Activated CD8-positive, alpha-beta T cell treated with anti-CD3 and anti-CD28 coated beads for 36 hours (primary cell): ENCODE measurements at regions of chr7 and their contacts with region 1.

Region 1: DNA sequence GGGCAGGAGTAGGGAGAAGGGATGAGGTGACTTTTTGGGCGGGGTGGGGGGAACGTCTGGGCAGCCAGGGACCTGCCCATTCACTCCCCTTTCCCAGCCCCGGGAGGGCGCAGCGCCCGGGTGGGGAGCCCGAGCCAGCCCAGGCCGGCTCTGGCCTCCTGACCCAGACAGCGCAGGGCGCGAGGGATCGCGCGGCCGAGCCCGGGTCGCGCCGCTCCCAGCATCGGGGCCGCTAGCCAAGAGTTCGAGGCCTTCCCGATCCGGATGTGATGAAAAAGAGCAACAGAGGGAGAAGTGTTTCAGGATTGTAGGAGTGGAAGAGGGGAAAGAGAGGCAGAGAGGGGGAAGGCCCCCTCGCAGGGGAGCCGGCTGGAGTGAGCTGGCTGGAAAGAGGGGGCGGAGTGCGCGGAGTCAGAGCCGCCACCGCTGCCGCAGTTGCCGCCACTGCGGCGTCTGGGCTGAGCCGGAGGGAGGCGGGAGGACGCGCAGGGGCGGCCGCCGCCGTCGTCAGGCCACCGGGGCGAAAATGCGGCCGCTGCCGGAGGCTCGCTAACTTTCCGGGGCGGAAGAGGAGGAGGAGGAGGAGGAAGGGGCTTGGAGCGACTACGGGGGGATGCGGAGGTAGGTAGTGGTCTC is at the start of gene MDFIC:
- DNase-seq: peak; percentile 72
- ATAC-seq: peak; percentile 64
- H3K4me3 Mint-ChIP-seq: peak within 1 kb of the TSS; percentile 81
- H3K27ac Mint-ChIP-seq: peak within 1 kb of the TSS; percentile 98
- H3K4me1 Mint-ChIP-seq: peaks cover 58% of the 10 kb centered on the region
- H3K27me3 Mint-ChIP-seq: no peaks in the 10 kb centered on the region
- CTCF ChIP-seq: no peak
- total RNA-seq, gene MDFIC: 53.5 to 55.3 TPM

Region 2: DNA sequence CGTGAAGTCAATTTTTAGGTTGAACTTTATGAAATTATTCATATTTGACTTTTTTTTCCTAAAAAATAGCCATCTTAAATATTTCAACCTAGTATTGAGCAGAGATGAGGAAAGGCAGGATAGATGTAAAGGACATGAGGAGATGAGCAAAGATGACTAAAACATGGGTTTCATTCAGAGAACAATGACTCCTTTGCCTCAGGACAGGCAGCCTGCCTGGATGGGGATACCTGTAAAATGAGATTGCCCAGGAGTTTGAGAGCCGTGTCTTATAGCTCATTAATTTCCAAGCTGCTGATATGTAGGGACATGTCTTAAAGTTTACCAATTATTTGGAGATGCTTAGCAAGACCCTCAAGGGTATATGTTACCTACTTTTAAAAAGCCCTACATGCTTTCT is 244.0 kb before region 1 on chr7:
- CTCF ChIA-PET with region 1: no interaction called
- POLR2A ChIA-PET with region 1: no interaction called
- intact Hi-C with region 1: no loop called
- DNase-seq: no peak
- ATAC-seq: no peak
- H3K4me3 Mint-ChIP-seq: no peak overlapping the region
- H3K27ac Mint-ChIP-seq: no peak overlapping the region
- H3K4me1 Mint-ChIP-seq: no peaks in the 10 kb centered on the region
- H3K27me3 Mint-ChIP-seq: peaks cover 1% of the 10 kb centered on the region
- CTCF ChIP-seq: no peak

Region 3: GRCh38 chr7:114789871-114790311 is 132.2 kb before region 1 on chr7:
- CTCF ChIA-PET with region 1: no interaction called
- POLR2A ChIA-PET with region 1: no interaction called
- intact Hi-C with region 1: loop called (anchors 10 kb)
- DNase-seq: no peak
- ATAC-seq: peak; percentile 55
- H3K4me3 Mint-ChIP-seq: no peak overlapping the region
- H3K27ac Mint-ChIP-seq: peak overlapping the region; percentile 72
- H3K4me1 Mint-ChIP-seq: peaks cover 34% of the 10 kb centered on the region
- H3K27me3 Mint-ChIP-seq: peaks cover 4% of the 10 kb centered on the region
- CTCF ChIP-seq: no peak

Region 4: DNA sequence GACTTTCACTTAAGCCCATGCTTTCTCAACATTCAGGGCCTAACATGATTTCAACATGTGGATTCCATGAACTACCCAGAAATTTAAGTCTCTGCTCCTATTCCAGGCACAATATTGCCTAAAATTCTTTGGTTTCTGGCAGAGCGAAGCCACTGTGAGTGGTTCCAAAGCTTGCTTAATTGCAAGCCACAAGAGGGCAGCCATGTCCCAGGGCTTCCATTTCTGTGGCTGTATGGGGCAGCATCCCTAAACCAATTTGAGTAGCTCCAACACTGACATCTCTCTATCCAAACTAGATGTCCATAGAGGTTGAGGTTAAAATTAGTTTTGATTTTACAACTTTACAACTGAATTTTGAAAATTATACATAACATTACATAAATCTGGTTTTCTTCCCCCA is 56.6 kb before region 1 on chr7:
- CTCF ChIA-PET with region 1: interaction called, 25 read pairs
- POLR2A ChIA-PET with region 1: interaction called, 3 read pairs
- intact Hi-C with region 1: loop called (anchors 5 kb)
- DNase-seq: peak; percentile 71
- ATAC-seq: peak; percentile 83
- H3K4me3 Mint-ChIP-seq: no peak overlapping the region
- H3K27ac Mint-ChIP-seq: no peak overlapping the region
- H3K4me1 Mint-ChIP-seq: peaks cover 4% of the 10 kb centered on the region
- H3K27me3 Mint-ChIP-seq: no peaks in the 10 kb centered on the region
- CTCF ChIP-seq: peak; percentile 72

Region 5: DNA sequence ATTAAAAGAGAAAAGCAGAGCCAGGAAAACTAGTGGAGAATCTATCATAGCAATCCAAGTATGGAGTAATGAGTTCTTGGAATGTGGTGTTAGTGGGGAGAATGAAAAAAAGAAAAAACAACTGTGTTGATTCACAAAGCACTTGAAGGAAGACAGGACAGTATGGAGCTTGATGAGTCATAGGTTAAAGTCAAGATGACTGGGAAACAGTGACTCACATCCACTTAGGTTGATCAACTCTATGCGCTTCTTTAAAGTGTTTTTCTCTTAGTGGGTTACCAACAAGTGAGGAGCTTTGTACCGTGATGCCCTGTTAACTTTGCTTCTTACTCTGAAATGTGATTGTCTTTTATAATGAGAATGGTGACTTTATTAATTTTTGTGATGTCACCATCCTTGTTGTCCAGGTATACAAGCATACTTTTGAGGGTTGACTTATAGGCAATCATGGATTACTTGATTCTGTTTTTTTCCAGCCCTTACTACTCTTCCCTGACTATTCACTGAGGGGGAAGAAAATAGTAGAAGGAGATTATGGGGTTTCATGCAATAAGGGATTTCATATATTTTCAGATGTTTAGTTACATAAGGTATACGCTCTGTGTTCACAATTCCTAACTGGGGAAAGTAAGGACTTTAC is 32.4 kb before region 1 on chr7:
- CTCF ChIA-PET with region 1: no interaction called
- POLR2A ChIA-PET with region 1: interaction called, 4 read pairs
- intact Hi-C with region 1: loop called (anchors 5 kb)
- DNase-seq: peak; percentile 28
- ATAC-seq: peak; percentile 98
- H3K4me3 Mint-ChIP-seq: no peak overlapping the region
- H3K27ac Mint-ChIP-seq: peak overlapping the region; percentile 92
- H3K4me1 Mint-ChIP-seq: peaks cover 36% of the 10 kb centered on the region
- H3K27me3 Mint-ChIP-seq: no peaks in the 10 kb centered on the region
- CTCF ChIP-seq: no peak

Region 6: DNA sequence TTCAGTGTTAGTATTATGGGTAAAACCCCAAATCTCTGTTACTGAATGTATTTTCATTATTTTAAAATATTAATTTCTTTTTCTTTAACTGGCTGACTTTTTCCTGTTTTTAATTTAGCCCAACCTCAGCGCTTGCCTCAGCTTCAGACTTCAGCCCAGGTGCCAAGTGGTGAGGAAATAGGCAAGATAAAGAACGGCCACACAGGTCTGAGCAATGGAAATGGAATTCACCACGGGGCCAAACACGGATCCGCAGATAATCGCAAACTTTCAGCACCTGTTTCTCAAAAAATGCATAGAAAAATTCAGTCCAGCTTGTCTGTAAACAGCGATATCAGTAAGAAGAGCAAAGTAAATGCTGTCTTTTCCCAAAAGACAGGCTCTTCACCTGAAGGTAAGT is 57.3 kb after region 1 on chr7:
- CTCF ChIA-PET with region 1: no interaction called
- POLR2A ChIA-PET with region 1: no interaction called
- intact Hi-C with region 1: no loop called
- DNase-seq: no peak
- ATAC-seq: no peak
- H3K4me3 Mint-ChIP-seq: no peak overlapping the region
- H3K27ac Mint-ChIP-seq: no peak overlapping the region
- H3K4me1 Mint-ChIP-seq: peaks cover 50% of the 10 kb centered on the region
- H3K27me3 Mint-ChIP-seq: no peaks in the 10 kb centered on the region
- CTCF ChIP-seq: no peak

Region 7: GRCh38 chr7:115008465-115009114 is 86.5 kb after region 1 on chr7:
- CTCF ChIA-PET with region 1: interaction called, 11 read pairs
- POLR2A ChIA-PET with region 1: no interaction called
- intact Hi-C with region 1: no loop called
- DNase-seq: peak; percentile 20
- ATAC-seq: peak; percentile 57
- H3K4me3 Mint-ChIP-seq: peak overlapping the region; percentile 54
- H3K27ac Mint-ChIP-seq: peak overlapping the region; percentile 89
- H3K4me1 Mint-ChIP-seq: peaks cover 61% of the 10 kb centered on the region
- H3K27me3 Mint-ChIP-seq: no peaks in the 10 kb centered on the region
- CTCF ChIP-seq: no peak

Region 8: DNA sequence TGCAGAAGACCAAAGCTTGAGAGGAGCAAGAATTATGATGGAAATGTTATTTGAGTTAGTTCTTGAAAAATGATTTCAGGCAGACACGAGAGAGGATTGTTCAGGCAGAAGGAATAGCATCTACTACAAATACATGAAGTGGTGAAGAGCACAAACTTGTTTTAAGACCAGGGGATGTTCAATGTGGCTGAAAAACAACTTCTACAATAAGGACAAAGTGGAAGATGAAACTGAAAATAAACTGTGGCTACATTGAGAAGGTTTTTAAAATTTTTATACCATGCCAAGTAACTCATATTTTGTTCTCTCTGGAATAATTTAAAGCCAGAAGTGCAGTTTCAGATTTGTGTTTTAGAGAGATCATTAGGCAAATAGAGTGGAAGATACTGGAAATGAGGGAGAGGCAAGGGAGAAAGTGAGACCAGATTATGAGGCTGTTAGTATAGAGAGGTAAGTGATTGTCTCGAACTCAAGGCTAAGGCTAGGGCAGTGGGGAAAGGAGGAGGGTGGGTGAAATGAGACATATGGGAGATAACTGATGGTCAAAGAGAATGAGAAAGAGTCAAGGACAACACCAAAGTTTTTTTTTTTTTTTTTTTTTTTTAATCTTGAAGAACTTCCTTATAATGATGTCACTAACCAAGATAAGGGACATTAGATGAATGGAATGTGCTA is 115.1 kb after region 1 on chr7:
- CTCF ChIA-PET with region 1: no interaction called
- POLR2A ChIA-PET with region 1: no interaction called
- intact Hi-C with region 1: no loop called
- DNase-seq: no peak
- ATAC-seq: no peak
- H3K4me3 Mint-ChIP-seq: no peak overlapping the region
- H3K27ac Mint-ChIP-seq: no peak overlapping the region
- H3K4me1 Mint-ChIP-seq: peaks cover 7% of the 10 kb centered on the region
- H3K27me3 Mint-ChIP-seq: no peaks in the 10 kb centered on the region
- CTCF ChIP-seq: no peak